ENCODE measurements at regions of chr1 and their contacts with region 1.

Region 1: GRCh38 chr1:21255278-21255942 is 34.9 kb downstream of the ECE1 start:
- DNase-seq: peak; percentile 93
- H3K4me3 ChIP-seq: no peak overlapping the region
- H3K27ac ChIP-seq: peak overlapping the region; percentile 49 to 57 (median 54)
- H3K4me1 ChIP-seq: peaks cover 0 to 27% (median 26%) of the 10 kb centered on the region in 4 donors
- H3K27me3 ChIP-seq: no peaks in the 10 kb centered on the region
- CTCF ChIP-seq: peak; percentile 79 to 93 (median 84)
- EP300 ChIP-seq: no peak
- POLR2A ChIP-seq: no peak

Region 2: DNA sequence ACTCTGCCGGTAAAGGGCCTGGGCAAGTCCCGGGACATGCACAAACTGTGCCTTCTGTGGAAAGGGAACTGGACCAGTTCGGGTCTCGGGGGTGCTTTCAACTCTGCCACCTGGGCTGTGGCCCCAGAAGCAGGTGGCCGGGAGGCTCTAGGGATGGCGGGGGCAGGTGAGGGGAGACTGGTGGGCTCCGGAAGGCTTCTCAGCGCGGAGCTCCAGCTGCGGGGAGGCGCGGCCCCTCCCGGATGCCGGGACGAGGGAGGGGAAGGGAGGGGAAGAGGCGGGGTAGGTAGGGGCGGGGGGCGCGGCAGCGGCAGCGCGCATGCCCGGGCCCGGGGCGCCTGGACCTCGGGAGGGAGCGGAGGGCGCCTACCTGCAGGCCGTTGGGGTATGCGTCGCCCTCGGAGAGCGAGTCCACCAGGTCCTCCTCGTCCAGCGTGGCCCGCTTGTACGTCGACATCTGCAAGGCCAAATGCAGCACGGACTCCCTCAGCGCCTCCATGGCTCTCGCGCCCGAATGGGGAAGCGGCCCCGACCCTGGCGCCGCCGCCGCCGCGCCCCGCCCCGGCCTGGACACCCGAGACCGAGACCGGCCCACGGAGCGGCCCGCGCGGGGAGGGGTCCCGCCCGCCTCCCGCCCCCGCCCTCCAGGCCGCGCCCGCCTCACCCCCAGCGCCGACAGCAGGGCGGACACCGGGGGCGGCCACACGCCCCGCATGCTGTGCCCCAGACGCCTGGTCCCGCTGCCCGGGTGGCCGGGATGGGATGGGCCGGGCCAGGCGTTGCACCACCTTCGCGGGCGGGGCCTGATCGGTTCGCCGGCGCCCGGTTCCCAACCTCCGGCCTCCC is 34.5 kb after region 1 on chr1 and contains the start of gene ECE1:
- intact Hi-C with region 1: no loop called
- DNase-seq: no peak
- H3K4me3 ChIP-seq: peak within 1 kb of the TSS; percentile 42 to 60 (median 52)
- H3K27ac ChIP-seq: peak within 1 kb of the TSS; percentile 40 to 68 (median 60)
- H3K4me1 ChIP-seq: peaks cover 0 to 55% (median 51%) of the 10 kb centered on the region in 4 donors
- H3K27me3 ChIP-seq: no peaks in the 10 kb centered on the region
- CTCF ChIP-seq: no peak
- EP300 ChIP-seq: no peak
- POLR2A ChIP-seq: no peak
- total RNA-seq, gene ECE1: 62.9 to 112 (median 80.8) TPM

Region 3: DNA sequence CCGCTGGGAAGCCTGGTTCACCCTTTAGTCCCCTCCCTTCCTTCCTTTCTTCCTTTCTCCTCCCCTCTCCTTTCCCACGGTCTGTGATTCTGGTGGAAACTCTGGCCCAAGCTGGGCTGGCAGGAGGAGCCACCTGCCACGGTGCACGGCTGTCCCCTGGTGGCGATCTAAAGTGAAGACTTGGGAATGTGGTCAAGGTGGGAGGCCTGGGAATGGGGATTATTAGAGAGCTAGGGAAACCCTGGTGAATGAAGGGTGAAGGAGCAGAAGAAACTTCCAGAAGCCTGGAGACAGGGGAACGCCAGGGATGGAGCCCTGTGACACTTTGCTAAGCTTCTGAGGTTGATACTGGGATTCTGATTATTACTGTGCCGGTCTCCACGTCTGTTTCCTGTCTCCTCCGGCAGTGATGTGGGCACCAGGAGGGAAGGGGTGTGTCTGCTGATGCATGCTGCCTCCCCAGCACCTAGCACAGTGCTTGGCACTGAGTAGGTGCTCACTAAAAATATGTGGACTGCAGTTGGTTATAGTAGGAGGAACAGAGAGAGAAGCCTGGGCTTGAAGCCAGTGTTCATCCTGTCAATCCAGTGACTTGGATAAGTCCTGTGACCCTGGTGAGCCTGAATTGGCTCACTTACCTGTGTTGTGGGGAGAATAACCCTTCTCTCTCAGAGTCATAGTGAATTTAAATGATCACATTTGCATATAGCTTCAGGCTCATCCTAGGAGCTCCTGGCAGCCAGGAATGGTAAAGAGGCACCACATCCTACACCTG is 113.3 kb after region 1 on chr1:
- intact Hi-C with region 1: loop called (anchors 1 kb)
- DNase-seq: peak; percentile 92
- H3K4me3 ChIP-seq: no peak overlapping the region
- H3K27ac ChIP-seq: no peak overlapping the region
- H3K4me1 ChIP-seq: peaks cover 0 to 3% (median 0%) of the 10 kb centered on the region in 4 donors
- H3K27me3 ChIP-seq: no peaks in the 10 kb centered on the region
- CTCF ChIP-seq: peak; percentile 99 to 100 (median 100)
- EP300 ChIP-seq: no peak
- POLR2A ChIP-seq: no peak

Measured in sigmoid colon (tissue), 7 donors.